ENCODE measurements at regions of chr11 and their contacts with region 1.

Region 1: GRCh38 chr11:6531267-6531752 is 34.2 kb downstream of the DNHD1 start:
- DNase-seq: no peak
- H3K4me3 ChIP-seq: no peak overlapping the region
- H3K27ac ChIP-seq: no peak overlapping the region
- H3K27me3 ChIP-seq: no peaks in the 10 kb centered on the region
- CTCF ChIP-seq: peak; percentile 82

Region 2: GRCh38 chr11:6473481-6474422 is 57.6 kb before region 1 on chr11 and contains the start of gene TRIM3:
- CTCF ChIA-PET with region 1: no interaction called
- POLR2A ChIA-PET with region 1: no interaction called
- DNase-seq: peak; percentile 50
- H3K4me3 ChIP-seq: peak within 1 kb of the TSS; percentile 84
- H3K27ac ChIP-seq: peak within 1 kb of the TSS; percentile 94
- H3K27me3 ChIP-seq: no peaks in the 10 kb centered on the region
- CTCF ChIP-seq: peak; percentile 57
- polyA plus RNA-seq, gene TRIM3: 10.5 and 11.7 TPM in 2 replicates

Region 3: GRCh38 chr11:6505577-6506240 is 25.6 kb before region 1 on chr11:
- CTCF ChIA-PET with region 1: interaction called, 12 read pairs
- POLR2A ChIA-PET with region 1: no interaction called
- DNase-seq: peak; percentile 16
- H3K4me3 ChIP-seq: no peak overlapping the region
- H3K27ac ChIP-seq: no peak overlapping the region
- H3K27me3 ChIP-seq: no peaks in the 10 kb centered on the region
- CTCF ChIP-seq: peak; percentile 60

Region 4: GRCh38 chr11:6547177-6547680 is 15.9 kb after region 1 on chr11:
- CTCF ChIA-PET with region 1: interaction called, 12 read pairs
- POLR2A ChIA-PET with region 1: no interaction called
- DNase-seq: no peak
- H3K4me3 ChIP-seq: no peak overlapping the region
- H3K27ac ChIP-seq: no peak overlapping the region
- H3K27me3 ChIP-seq: no peaks in the 10 kb centered on the region
- CTCF ChIP-seq: no peak

Region 5: DNA sequence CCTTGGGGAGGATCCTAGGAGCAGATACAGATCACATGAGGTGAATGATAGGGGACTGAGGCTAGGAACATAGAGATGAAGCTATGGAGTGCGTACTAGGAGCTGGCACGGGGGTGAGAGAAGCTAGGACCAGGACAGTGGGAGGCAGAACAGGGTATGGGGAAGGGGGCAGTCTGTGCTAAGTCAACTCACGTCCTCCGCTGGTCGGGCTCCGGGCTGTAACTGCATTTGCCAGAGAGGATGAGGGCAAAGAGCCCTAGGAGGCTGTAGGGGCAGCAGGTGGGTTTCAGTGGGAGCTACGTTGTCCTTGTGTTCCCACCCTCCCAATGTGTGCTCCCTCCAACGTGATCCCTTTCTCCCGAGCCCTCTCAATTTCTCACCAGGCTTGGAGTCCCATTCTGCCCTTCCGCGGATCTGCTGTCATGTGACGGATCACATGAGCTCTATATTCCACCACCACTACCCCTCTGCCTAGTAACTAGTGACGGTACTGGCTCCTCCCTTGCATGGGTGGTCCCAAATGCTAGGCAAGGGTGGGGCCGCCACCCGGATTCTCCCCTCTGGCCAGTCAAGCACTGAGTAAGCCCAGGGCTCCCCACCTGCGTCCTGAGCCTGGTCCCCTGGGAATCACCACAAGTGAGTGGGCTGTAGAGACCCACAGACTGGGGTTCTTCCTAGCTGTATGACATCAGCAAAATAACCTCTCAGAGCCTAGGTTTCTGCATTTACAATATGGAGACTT is 87.9 kb after region 1 on chr11 and contains the start of gene TPP1:
- CTCF ChIA-PET with region 1: interaction called, 21 read pairs
- POLR2A ChIA-PET with region 1: no interaction called
- DNase-seq: peak; percentile 86
- H3K4me3 ChIP-seq: peak within 1 kb of the TSS; percentile 93
- H3K27ac ChIP-seq: peak within 1 kb of the TSS; percentile 73
- H3K27me3 ChIP-seq: peaks cover 2% of the 10 kb centered on the region
- CTCF ChIP-seq: no peak
- polyA plus RNA-seq, gene TPP1: 128 and 152 TPM in 2 replicates

Region 6: DNA sequence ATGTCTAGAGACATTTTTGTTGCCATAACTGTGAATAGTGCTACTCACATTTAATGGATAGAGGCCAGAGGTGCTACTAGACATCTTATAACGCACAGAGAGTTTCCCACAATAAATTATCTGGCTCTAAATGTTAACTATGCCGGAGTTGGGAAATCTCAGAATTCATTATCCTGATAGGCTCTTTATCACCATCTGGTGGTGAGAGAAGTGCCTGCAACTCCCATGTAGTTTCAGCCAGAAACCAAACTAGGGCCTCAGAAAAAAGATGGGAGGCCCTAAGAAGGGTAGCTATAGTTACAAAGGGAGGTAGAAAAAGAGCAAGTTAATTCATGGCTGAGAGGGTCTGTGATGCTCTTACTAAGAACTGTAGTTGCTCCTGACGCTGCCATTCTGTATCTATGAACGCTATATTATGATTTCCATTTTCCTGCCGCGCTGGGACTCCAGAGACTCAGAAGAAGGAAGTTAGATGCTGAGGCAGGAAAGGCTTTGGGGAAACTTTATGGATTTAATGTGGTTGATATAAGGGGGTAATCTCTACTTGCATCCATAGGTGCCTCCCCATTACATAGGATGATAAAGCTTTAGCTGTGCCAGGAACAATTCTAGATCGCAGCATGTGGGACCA is 174.7 kb after region 1 on chr11:
- CTCF ChIA-PET with region 1: interaction called, 88 read pairs
- POLR2A ChIA-PET with region 1: no interaction called
- DNase-seq: no peak
- H3K4me3 ChIP-seq: no peak overlapping the region
- H3K27ac ChIP-seq: no peak overlapping the region
- H3K27me3 ChIP-seq: no peaks in the 10 kb centered on the region
- CTCF ChIP-seq: peak; percentile 98